Transverse colon (tissue), 4 donors: ENCODE measurements at regions of chr3 and their contacts with region 1.

Region 1: DNA sequence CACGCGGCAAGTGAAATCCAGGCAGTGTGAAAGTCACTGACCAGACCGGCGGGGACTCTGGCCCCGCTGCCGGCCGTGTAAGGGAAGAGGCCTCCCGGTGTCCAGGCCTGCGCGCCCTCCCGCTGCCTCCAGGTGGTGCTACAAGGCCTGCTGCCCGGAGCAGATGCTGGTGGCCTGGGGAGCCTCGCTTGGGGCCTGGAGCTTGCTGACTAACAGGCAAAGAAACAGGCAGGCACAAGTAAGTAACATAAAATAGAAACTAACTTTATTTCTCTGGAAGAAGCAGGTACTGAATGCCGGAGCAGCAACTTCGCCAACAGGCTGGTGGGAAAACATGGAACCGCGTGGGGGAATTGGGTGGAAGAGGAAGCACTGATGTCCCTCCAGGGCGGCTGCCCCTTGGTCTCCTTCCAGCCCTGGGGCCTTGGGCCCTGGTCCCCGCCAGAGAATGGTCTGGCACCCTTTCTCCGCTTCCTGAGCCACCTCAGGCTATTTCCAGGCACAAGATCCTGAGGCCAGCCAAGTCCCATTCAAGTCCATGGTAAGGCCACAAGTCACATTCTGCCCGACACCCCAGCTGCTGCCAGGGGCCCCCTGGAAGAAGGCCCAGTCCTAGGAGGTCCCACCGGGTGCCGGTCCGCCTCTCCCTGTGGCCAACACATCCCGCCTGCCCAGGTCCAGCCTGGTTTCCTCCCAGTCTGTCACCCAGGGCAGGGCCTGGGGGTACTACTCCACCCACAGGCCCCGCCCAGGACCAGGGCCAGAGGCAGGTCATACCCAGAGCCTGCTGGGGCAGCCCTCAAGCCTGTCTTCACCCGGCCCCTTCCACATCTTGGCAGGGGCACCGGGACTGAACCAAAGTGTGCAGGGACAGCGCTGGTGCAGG is 45.0 kb downstream of the TNK2 start:
- DNase-seq: peak; percentile 90
- H3K4me3 ChIP-seq: no peak overlapping the region
- H3K27ac ChIP-seq: peak overlapping the region; percentile 22 to 75 (median 30)
- H3K4me1 ChIP-seq: peaks cover 0 to 18% (median 1%) of the 10 kb centered on the region in 4 donors
- H3K27me3 ChIP-seq: peaks cover 6% of the 10 kb centered on the region
- CTCF ChIP-seq: peak; percentile 85 to 95 (median 94)
- EP300 ChIP-seq: no peak
- POLR2A ChIP-seq: no peak

Region 2: GRCh38 chr3:195894780-195895607 is 31.6 kb after region 1 on chr3:
- in situ Hi-C with region 1: no loop called
- intact Hi-C with region 1: loop called (anchors 2 kb)
- DNase-seq: peak; percentile 65
- H3K4me3 ChIP-seq: peak overlapping the region; percentile 42 to 70 (median 50)
- H3K27ac ChIP-seq: peak overlapping the region; percentile 83 to 89 (median 87)
- H3K4me1 ChIP-seq: peaks cover 22 to 55% (median 36%) of the 10 kb centered on the region in 4 donors
- H3K27me3 ChIP-seq: no peaks in the 10 kb centered on the region
- CTCF ChIP-seq: peak; percentile 91 to 98 (median 97)
- EP300 ChIP-seq: no peak
- POLR2A ChIP-seq: no peak

Region 3: DNA sequence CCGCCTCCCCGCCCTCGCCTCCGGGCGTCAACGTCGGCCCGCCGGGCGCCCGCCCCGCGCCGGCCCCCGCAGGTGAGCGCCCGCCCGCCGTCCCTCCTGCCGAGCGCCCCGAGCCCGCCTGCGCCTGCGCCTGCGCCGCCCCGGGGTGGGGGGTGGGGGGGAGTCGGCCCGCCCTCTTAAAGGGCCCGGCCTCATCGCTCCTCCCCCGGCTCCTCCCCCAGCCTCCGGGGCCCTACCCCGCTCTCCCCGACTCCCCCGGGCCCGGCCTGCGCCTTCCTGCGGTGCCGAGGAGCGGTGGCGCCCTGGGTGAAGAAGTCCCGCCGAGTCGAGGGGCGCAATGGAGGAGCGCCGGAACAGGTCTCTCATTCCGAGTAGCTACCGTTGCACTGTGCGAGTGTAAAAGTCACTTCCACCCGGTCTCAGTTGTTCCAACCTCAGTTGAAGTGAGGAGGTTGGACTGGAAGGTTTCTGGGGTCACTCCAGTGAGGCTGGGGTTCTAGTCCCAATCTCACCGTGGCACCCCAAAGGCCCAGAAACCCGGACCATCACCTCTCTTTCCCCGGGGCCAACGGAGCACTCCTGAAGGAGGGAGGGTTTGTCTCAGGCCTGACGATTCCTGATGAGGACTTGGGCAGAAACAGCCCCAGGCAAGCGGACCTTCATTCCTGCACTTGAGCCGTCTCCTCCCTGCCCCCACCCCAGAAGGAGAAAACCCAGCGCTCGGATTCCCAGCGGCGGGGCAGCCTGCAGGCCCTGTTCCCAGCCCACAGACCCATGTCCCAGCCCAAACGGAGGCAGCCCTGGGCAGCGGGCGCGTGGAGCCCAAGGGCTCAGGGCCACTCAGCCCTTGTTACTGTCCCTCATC is 46.5 kb after region 1 on chr3:
- in situ Hi-C with region 1: loop called in 2 of 4 experiments (anchors 5 to 10 kb)
- intact Hi-C with region 1: loop called (anchors 5 kb)
- DNase-seq: peak; percentile 92
- H3K4me3 ChIP-seq: peak overlapping the region; percentile 22 to 82 (median 78)
- H3K27ac ChIP-seq: peak overlapping the region; percentile 73 to 83 (median 78)
- H3K4me1 ChIP-seq: peaks cover 14 to 47% (median 38%) of the 10 kb centered on the region in 4 donors
- H3K27me3 ChIP-seq: no peaks in the 10 kb centered on the region
- CTCF ChIP-seq: no peak
- EP300 ChIP-seq: no peak
- POLR2A ChIP-seq: no peak